MCF 10A (cell line): ENCODE measurements at regions of chr20 and their contacts with region 1.

Region 1: DNA sequence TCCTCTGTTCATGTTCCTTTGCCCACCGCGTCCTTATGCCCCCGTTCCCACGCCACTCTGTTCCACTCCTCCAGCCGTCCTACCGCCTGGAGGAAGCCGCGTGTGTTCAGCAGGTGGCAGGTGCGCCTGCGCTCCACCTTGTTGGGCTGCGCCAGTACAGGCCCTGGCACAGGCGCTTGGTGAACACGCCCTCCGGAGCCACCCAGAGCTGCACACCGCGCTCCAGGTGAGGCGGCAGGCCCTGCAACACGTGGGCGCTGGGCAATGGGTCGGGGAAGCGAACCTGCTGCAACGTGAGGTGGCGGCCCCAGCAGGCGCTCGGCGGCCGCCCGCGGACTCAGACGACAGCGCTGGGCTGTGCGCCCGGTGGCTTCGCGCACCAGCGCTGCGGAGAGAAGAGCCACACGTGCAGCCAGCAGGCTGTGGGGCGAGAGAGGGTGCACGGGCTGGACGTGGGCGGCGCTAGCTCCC is 4.1 kb upstream of the FOXS1 start:
- DNase-seq: no peak
- H3K4me3 Mint-ChIP-seq: no peak overlapping the region
- H3K27ac Mint-ChIP-seq: no peak overlapping the region
- H3K4me1 Mint-ChIP-seq: no peaks in the 10 kb centered on the region
- H3K27me3 Mint-ChIP-seq: peaks cover 33% of the 10 kb centered on the region
- CTCF ChIP-seq: no peak

Region 2: GRCh38 chr20:31835977-31836852 is 13.3 kb before region 1 on chr20:
- CTCF ChIA-PET with region 1: interaction called, 92 read pairs
- POLR2A ChIA-PET with region 1: interaction called, 4 read pairs
- intact Hi-C with region 1: no loop called
- DNase-seq: peak; percentile 93
- H3K4me3 Mint-ChIP-seq: no peak overlapping the region
- H3K27ac Mint-ChIP-seq: no peak overlapping the region
- H3K4me1 Mint-ChIP-seq: peaks cover 6% of the 10 kb centered on the region
- H3K27me3 Mint-ChIP-seq: no peaks in the 10 kb centered on the region
- CTCF ChIP-seq: no peak

Region 3: GRCh38 chr20:31923388-31924331 is 74.2 kb after region 1 on chr20:
- CTCF ChIA-PET with region 1: interaction called, 24 read pairs
- POLR2A ChIA-PET with region 1: no interaction called
- intact Hi-C with region 1: no loop called
- DNase-seq: no peak
- H3K4me3 Mint-ChIP-seq: no peak overlapping the region
- H3K27ac Mint-ChIP-seq: no peak overlapping the region
- H3K4me1 Mint-ChIP-seq: peaks cover 6% of the 10 kb centered on the region
- H3K27me3 Mint-ChIP-seq: peaks cover 52% of the 10 kb centered on the region
- CTCF ChIP-seq: no peak

Region 4: GRCh38 chr20:31956556-31957526 is 107.4 kb after region 1 on chr20:
- CTCF ChIA-PET with region 1: interaction called, 200 read pairs
- POLR2A ChIA-PET with region 1: interaction called, 6 read pairs
- intact Hi-C with region 1: loop called (anchors 1 kb)
- DNase-seq: no peak
- H3K4me3 Mint-ChIP-seq: no peak overlapping the region
- H3K27ac Mint-ChIP-seq: no peak overlapping the region
- H3K4me1 Mint-ChIP-seq: no peaks in the 10 kb centered on the region
- H3K27me3 Mint-ChIP-seq: peaks cover 70% of the 10 kb centered on the region
- CTCF ChIP-seq: no peak

Region 5: DNA sequence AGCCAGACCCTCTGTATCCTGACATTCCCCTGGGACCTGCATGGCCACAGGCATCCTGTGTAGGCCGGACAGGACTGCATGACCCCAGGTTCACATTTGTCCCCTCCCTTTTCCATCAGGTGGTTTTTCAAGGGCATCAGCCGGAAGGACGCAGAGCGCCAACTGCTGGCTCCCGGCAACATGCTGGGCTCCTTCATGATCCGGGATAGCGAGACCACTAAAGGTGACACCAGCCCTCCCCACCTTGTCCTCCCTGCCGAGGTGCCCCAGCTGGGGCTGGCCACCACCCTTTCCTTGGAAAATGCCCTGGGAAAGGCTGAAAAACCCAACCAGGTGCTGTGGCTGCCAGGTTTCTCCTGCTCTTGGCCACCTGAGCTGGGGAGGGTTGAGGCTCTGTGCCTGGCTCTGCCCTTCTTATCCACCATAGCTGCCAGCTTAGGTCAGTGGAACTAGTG is 230.2 kb after region 1 on chr20:
- CTCF ChIA-PET with region 1: interaction called, 10 read pairs
- POLR2A ChIA-PET with region 1: no interaction called
- intact Hi-C with region 1: no loop called
- DNase-seq: no peak
- H3K4me3 Mint-ChIP-seq: no peak overlapping the region
- H3K27ac Mint-ChIP-seq: no peak overlapping the region
- H3K4me1 Mint-ChIP-seq: no peaks in the 10 kb centered on the region
- H3K27me3 Mint-ChIP-seq: peaks cover 88% of the 10 kb centered on the region
- CTCF ChIP-seq: no peak